Prostate gland (tissue), 2 donors: ENCODE measurements at regions of chr4 and their contacts with region 1.

Region 1: GRCh38 chr4:40933272-40934053 is 183.7 kb downstream of the NSUN7 start:
- DNase-seq: no peak
- H3K4me3 ChIP-seq: no peak overlapping the region
- H3K27ac ChIP-seq: no peak overlapping the region
- H3K4me1 ChIP-seq: no peaks in the 10 kb centered on the region
- H3K27me3 ChIP-seq: no peaks in the 10 kb centered on the region
- CTCF ChIP-seq: no peak
- POLR2A ChIP-seq: no peak

Region 2: GRCh38 chr4:41044165-41044564 is 110.7 kb after region 1 on chr4:
- intact Hi-C with region 1: loop called (anchors 10 kb)
- DNase-seq: no peak
- H3K4me3 ChIP-seq: no peak overlapping the region
- H3K27ac ChIP-seq: no peak overlapping the region
- H3K4me1 ChIP-seq: no peaks in the 10 kb centered on the region
- H3K27me3 ChIP-seq: no peaks in the 10 kb centered on the region
- CTCF ChIP-seq: peak in 1 of 4 experiments; percentile 10
- POLR2A ChIP-seq: no peak